OCI-LY7 (cell line): ENCODE measurements at regions of chr14 and their contacts with region 1.

Region 1: DNA sequence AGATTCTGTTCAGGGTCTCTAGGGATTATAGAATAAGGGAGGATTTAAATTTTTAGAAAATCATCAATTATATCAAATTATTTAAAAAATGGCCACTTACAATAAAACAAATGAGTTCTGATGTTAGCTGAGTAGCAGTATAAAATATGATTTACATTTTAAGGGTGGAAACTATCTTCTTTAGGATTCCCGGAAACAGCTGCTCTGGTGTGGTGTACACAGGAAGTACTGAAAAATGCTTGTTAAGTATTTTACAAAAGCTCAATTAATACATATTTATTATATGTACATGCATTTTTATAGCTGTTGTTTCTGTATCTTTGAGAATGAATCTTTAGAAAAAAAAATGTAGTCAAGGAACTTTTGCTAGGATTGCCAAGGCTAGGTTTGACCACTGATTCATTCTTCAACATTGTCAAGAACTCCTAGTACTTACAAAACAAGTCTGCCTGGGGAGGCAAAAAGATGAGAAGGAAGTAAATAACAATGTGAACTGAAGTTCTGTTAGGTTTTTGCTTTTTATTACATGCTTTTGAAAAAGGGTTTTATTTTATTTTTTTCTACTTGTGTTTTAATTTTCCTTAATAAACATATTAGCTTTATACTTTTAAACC is 48.0 kb downstream of the ARF6 start:
- DNase-seq: peak; percentile 66
- H3K4me3 ChIP-seq: peak overlapping the region; percentile 16
- H3K27ac ChIP-seq: peak overlapping the region; percentile 55
- H3K4me1 ChIP-seq: peaks cover 25% of the 10 kb centered on the region
- CTCF ChIP-seq: no peak

Region 2: DNA sequence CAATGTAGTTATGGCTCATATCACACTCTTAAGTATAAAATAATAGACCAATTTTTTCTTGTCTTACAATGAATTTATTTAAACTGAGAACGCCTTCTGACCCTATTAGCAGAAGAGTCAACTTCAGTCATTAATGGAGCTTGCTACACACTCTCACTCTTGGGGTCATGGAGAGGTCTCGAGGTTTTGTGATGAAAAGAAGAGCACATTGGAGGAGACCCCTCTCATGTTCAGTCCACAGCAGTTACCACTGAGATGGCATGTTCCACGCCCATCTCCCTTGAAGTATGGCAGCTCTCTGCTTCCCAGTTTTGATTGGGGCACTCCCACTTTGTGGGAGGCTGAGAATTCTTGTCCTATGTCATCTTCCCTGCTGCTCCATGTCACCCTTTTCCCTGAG is 621.1 kb before region 1 on chr14:
- CTCF ChIA-PET with region 1: no interaction called
- POLR2A ChIA-PET with region 1: no interaction called
- intact Hi-C with region 1: no loop called
- DNase-seq: no peak
- H3K4me3 ChIP-seq: no peak overlapping the region
- H3K27ac ChIP-seq: no peak overlapping the region
- H3K4me1 ChIP-seq: no peaks in the 10 kb centered on the region
- CTCF ChIP-seq: no peak

Region 3: GRCh38 chr14:49879683-49880204 is 61.2 kb before region 1 on chr14:
- CTCF ChIA-PET with region 1: no interaction called
- POLR2A ChIA-PET with region 1: interaction called, 13 read pairs
- intact Hi-C with region 1: no loop called
- DNase-seq: peak; percentile 90
- H3K4me3 ChIP-seq: peak overlapping the region; percentile 13
- H3K27ac ChIP-seq: peak overlapping the region; percentile 56
- H3K4me1 ChIP-seq: peaks cover 25% of the 10 kb centered on the region
- CTCF ChIP-seq: peak; percentile 83

Region 4: GRCh38 chr14:49930720-49931119 is 10.2 kb before region 1 on chr14:
- CTCF ChIA-PET with region 1: interaction called, 3 read pairs
- POLR2A ChIA-PET with region 1: interaction called, 15 read pairs
- intact Hi-C with region 1: no loop called
- DNase-seq: peak; percentile 68
- H3K4me3 ChIP-seq: no peak overlapping the region
- H3K27ac ChIP-seq: peak overlapping the region; percentile 79
- H3K4me1 ChIP-seq: peaks cover 38% of the 10 kb centered on the region
- CTCF ChIP-seq: no peak